PC-9 (cell line): ENCODE measurements at regions of chr3 and their contacts with region 1.

Region 1: GRCh38 chr3:77281721-77282120 is 241.8 kb downstream of the ROBO2 start:
- DNase-seq: no peak
- H3K4me3 ChIP-seq: no peak overlapping the region
- H3K27ac ChIP-seq: no peak overlapping the region
- H3K4me1 ChIP-seq: no peaks in the 10 kb centered on the region
- H3K27me3 ChIP-seq: no peaks in the 10 kb centered on the region
- CTCF ChIP-seq: no peak

Region 2: GRCh38 chr3:77158730-77159581 is 122.8 kb before region 1 on chr3:
- CTCF ChIA-PET with region 1: no interaction called
- POLR2A ChIA-PET with region 1: no interaction called
- intact Hi-C with region 1: no loop called
- DNase-seq: no peak
- H3K4me3 ChIP-seq: no peak overlapping the region
- H3K27ac ChIP-seq: no peak overlapping the region
- H3K4me1 ChIP-seq: no peaks in the 10 kb centered on the region
- H3K27me3 ChIP-seq: no peaks in the 10 kb centered on the region
- CTCF ChIP-seq: no peak

Region 3: DNA sequence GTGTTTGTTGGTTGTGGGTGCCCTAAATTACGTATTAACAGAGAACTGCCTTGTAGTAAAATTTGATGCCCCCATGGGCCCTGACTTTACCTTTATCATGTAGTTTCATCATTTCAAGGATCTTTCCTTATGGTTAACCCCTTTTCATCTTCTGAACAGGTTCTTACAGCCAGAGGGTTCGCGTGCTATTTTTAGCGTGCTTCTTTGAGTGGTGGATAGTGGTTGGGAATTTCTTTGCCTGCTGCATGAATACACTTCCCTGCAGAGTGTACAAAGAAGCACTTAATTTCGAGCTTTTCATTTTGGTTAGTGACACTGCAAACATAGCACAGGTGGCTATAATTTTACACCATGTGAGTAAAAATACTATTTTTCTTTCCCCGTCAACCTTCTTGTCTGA is 10.0 kb before region 1 on chr3:
- CTCF ChIA-PET with region 1: interaction called, 11 read pairs
- POLR2A ChIA-PET with region 1: no interaction called
- intact Hi-C with region 1: no loop called
- DNase-seq: no peak
- H3K4me3 ChIP-seq: no peak overlapping the region
- H3K27ac ChIP-seq: no peak overlapping the region
- H3K4me1 ChIP-seq: no peaks in the 10 kb centered on the region
- H3K27me3 ChIP-seq: no peaks in the 10 kb centered on the region
- CTCF ChIP-seq: no peak

Region 4: DNA sequence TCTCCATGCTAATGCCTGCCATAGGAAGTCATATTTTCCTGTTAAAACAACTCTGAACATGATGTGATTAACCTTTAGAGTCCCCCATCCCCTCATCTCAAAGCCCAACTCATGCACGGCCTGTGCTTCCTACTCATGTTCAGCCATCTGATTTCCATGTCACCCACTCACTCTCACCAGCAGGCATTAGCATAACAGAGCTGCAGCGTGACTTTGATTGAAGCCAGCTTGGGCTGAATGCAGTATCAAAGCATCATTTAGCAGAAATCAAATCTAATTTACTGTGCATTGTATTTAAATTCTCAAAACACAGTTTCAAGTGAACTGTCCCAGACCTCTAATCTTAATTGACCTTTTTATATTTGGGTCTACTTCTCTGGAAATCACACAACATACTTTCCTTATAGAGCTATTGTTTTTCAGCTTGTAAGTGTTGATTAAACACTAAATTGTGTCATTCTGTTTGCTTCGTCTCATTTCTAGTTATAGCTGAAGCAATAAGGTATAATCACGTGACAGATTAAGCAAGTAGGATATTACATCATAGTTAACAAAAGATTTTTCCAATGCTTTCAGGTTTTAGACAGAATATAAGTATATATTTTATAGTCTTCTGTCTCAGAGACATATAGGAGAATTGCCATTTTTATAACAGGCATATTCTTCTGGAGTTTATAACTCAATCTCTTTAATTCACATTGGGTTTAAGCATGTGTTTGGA is 259.6 kb after region 1 on chr3:
- CTCF ChIA-PET with region 1: no interaction called
- POLR2A ChIA-PET with region 1: no interaction called
- intact Hi-C with region 1: no loop called
- DNase-seq: no peak
- H3K4me3 ChIP-seq: no peak overlapping the region
- H3K27ac ChIP-seq: no peak overlapping the region
- H3K4me1 ChIP-seq: no peaks in the 10 kb centered on the region
- H3K27me3 ChIP-seq: no peaks in the 10 kb centered on the region
- CTCF ChIP-seq: no peak